Naive thymus-derived CD4-positive, alpha-beta T cell (primary cell): ENCODE measurements at regions of chr10 and their contacts with region 1.

Region 1: DNA sequence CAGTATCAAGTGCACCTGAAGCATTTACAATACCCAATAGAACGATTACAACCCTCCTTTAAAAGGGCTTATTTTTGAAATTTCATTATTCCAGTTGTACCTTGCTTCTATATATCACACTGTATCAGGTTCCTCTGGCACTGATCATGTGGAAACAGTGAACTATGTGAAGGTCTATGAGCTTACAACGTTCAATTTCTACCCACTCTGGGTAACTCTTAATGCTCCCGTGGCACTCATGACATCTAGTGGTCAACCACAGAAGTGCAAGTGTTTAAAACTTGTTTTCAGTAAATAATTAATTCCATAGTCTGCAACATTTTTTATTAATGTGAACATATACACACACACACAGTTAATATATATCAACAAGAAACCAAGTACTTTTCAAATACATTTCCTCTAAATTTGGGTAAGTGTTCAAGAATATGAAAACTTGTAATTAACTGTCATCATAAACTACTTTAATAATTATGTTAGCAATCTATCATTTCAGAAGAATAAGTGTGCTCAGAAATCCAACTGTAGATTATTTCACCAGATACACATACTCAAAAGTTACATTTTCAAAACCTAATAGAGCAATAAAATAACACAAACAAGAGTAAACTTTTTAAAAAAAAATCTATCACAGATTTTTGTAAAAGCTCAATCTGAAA is 61.0 kb downstream of the MPP7 start:
- DNase-seq: peak in 7 of 9 donors; percentile 16 to 54 (median 43)
- ATAC-seq: peak; percentile 90
- H3K4me3 ChIP-seq: no peak overlapping the region
- H3K4me3 Mint-ChIP-seq: no peak overlapping the region
- H3K27ac ChIP-seq: no peak overlapping the region
- H3K27ac Mint-ChIP-seq: no peak overlapping the region
- H3K4me1 ChIP-seq: peaks cover 0 to 12% of the 10 kb centered on the region in 2 donors
- H3K4me1 Mint-ChIP-seq: peaks cover 5 to 59% (median 39%) of the 10 kb centered on the region in 7 donors
- H3K27me3 ChIP-seq: no peaks in the 10 kb centered on the region
- H3K27me3 Mint-ChIP-seq: peaks cover 0 to 12% (median 0%) of the 10 kb centered on the region in 5 donors

Region 2: DNA sequence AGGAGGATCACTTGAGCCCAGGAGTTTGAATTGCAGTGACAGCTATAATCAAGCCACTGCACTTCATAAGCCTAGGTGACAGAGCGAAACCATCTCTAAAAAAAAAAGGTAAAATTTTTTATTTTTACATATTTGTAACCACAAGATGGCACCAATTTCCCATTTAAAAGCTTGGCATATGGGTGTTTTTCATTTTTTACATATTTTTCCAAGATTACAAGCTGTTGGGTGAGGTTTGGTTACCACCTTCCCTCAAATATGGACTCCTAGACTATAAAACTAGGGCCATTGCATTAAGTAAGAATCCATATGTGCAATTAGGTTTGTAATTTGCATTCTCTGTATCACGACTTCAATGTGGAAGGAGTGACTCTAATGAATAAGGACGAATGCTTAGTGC is 872.0 kb before region 1 on chr10:
- CTCF ChIA-PET with region 1: interaction called, 4 read pairs
- POLR2A ChIA-PET with region 1: no interaction called
- intact Hi-C with region 1: loop called in 1 of 2 experiments (anchors 10 kb)
- DNase-seq: peak in 2 of 9 donors; percentile 9 to 11
- ATAC-seq: no peak
- H3K4me3 ChIP-seq: no peak overlapping the region
- H3K4me3 Mint-ChIP-seq: no peak overlapping the region
- H3K27ac ChIP-seq: no peak overlapping the region
- H3K27ac Mint-ChIP-seq: no peak overlapping the region
- H3K4me1 ChIP-seq: no peaks in the 10 kb centered on the region
- H3K4me1 Mint-ChIP-seq: peaks cover 0 to 3% (median 0%) of the 10 kb centered on the region in 7 donors
- H3K27me3 ChIP-seq: no peaks in the 10 kb centered on the region
- H3K27me3 Mint-ChIP-seq: peaks cover 0 to 8% (median 4%) of the 10 kb centered on the region in 5 donors

Region 3: DNA sequence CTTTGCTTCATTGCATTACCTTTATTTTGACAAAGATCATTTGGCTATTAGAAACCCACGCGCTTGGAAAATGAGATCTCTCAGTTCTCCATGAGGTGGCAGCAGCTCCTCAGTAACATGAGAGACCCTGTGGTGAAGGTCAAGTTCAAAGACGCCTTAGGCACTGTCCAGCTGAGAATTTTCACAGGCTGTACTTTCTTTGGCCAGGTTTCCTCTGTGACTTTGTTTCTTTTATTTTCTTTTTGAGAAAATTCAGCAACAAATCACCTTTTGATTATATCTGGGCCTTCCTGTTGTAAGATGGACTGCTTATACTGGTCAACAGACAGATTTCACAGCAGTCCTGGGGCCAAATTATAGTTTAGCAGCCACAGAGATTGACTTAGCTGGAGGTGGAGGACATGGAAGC is 683.3 kb before region 1 on chr10:
- CTCF ChIA-PET with region 1: no interaction called
- POLR2A ChIA-PET with region 1: no interaction called
- intact Hi-C with region 1: loop called (anchors 1 to 2 kb)
- DNase-seq: peak in 3 of 9 donors; percentile 10 to 25 (median 15)
- ATAC-seq: peak; percentile 63
- H3K4me3 ChIP-seq: no peak overlapping the region
- H3K4me3 Mint-ChIP-seq: no peak overlapping the region
- H3K27ac ChIP-seq: no peak overlapping the region
- H3K27ac Mint-ChIP-seq: peak overlapping the region in 1 of 9 donors; percentile 36
- H3K4me1 ChIP-seq: peaks cover 0 to under 1% of the 10 kb centered on the region in 2 donors
- H3K4me1 Mint-ChIP-seq: peaks cover 0 to 4% (median 0%) of the 10 kb centered on the region in 7 donors
- H3K27me3 ChIP-seq: no peaks in the 10 kb centered on the region
- H3K27me3 Mint-ChIP-seq: peaks cover 0 to 16% (median 0%) of the 10 kb centered on the region in 5 donors

Region 4: GRCh38 chr10:27783660-27784059 is 458.2 kb before region 1 on chr10:
- CTCF ChIA-PET with region 1: interaction called, 3 read pairs
- POLR2A ChIA-PET with region 1: no interaction called
- intact Hi-C with region 1: loop called in 1 of 2 experiments (anchors 1 kb)
- DNase-seq: peak in 6 of 9 donors; percentile 8 to 39 (median 20)
- ATAC-seq: peak; percentile 77
- H3K4me3 ChIP-seq: no peak overlapping the region
- H3K4me3 Mint-ChIP-seq: no peak overlapping the region
- H3K27ac ChIP-seq: no peak overlapping the region
- H3K27ac Mint-ChIP-seq: no peak overlapping the region
- H3K4me1 ChIP-seq: no peaks in the 10 kb centered on the region
- H3K4me1 Mint-ChIP-seq: no peaks in the 10 kb centered on the region
- H3K27me3 ChIP-seq: no peaks in the 10 kb centered on the region
- H3K27me3 Mint-ChIP-seq: peaks cover 4 to 26% (median 15%) of the 10 kb centered on the region in 5 donors

Region 5: DNA sequence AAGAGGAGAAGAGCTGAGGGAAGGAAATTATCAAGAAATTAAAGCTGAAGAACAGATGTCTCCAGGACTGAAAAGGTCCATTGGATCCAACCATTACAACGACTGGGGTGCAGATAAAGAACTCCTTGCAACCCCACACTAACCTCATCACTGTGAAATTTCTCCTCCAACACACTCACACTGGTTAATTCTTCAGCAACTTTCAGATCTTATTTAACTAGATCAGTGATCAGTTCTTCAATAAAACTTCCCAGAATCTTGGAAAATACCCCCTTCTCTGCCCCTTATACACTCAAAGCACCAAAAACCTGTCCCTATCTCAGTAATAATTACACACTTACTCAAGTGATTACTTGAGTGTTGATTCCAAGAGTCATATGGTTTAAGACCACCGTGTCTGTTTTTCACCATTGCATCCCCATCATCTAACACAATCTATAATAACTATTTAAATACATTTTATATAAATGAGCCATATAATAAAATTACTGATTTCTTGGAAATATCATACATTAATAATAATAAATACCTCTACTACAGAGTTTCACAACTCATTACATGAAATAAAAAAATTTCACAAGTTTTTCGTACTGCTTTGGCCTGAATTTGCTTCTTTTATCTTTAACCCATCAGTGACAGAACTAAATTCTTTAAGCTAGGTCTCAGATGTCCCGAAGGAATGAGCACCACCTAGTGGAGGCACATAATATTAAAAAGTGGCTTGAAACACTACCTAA is 62.7 kb before region 1 on chr10:
- CTCF ChIA-PET with region 1: interaction called, 4 read pairs
- POLR2A ChIA-PET with region 1: no interaction called
- intact Hi-C with region 1: loop called in 1 of 2 experiments (anchors 1 kb)
- DNase-seq: peak in 7 of 9 donors; percentile 18 to 63 (median 49)
- ATAC-seq: peak; percentile 86
- H3K4me3 ChIP-seq: peak overlapping the region; percentile 55
- H3K4me3 Mint-ChIP-seq: peak overlapping the region; percentile 0 to 98 (median 87)
- H3K27ac ChIP-seq: peak overlapping the region; percentile 54
- H3K27ac Mint-ChIP-seq: peak overlapping the region; percentile 77 to 98 (median 92)
- H3K4me1 ChIP-seq: peaks cover 10 to 12% of the 10 kb centered on the region in 2 donors
- H3K4me1 Mint-ChIP-seq: peaks cover 17 to 70% (median 55%) of the 10 kb centered on the region in 7 donors
- H3K27me3 ChIP-seq: no peaks in the 10 kb centered on the region
- H3K27me3 Mint-ChIP-seq: peaks cover 0 to 9% (median 0%) of the 10 kb centered on the region in 5 donors

Region 6: GRCh38 chr10:28652696-28653095 is 410.8 kb after region 1 on chr10:
- CTCF ChIA-PET with region 1: no interaction called
- POLR2A ChIA-PET with region 1: no interaction called
- intact Hi-C with region 1: no loop called
- DNase-seq: no peak
- ATAC-seq: no peak
- H3K4me3 ChIP-seq: no peak overlapping the region
- H3K4me3 Mint-ChIP-seq: no peak overlapping the region
- H3K27ac ChIP-seq: no peak overlapping the region
- H3K27ac Mint-ChIP-seq: no peak overlapping the region
- H3K4me1 ChIP-seq: no peaks in the 10 kb centered on the region
- H3K4me1 Mint-ChIP-seq: no peaks in the 10 kb centered on the region
- H3K27me3 ChIP-seq: no peaks in the 10 kb centered on the region
- H3K27me3 Mint-ChIP-seq: peaks cover 0 to 19% (median 7%) of the 10 kb centered on the region in 5 donors